Mammary epithelial cell (primary cell): ENCODE measurements at regions of chr14 and their contacts with region 1.

Region 1: GRCh38 chr14:23665375-23666192 is 29.4 kb downstream of the DHRS2 start:
- DNase-seq: peak; percentile 27
- H3K4me3 ChIP-seq: no peak overlapping the region
- H3K27ac ChIP-seq: no peak overlapping the region
- H3K4me1 ChIP-seq: peaks cover 17% of the 10 kb centered on the region
- H3K27me3 ChIP-seq: no peaks in the 10 kb centered on the region
- CTCF ChIP-seq: peak; percentile 65 to 76

Region 2: DNA sequence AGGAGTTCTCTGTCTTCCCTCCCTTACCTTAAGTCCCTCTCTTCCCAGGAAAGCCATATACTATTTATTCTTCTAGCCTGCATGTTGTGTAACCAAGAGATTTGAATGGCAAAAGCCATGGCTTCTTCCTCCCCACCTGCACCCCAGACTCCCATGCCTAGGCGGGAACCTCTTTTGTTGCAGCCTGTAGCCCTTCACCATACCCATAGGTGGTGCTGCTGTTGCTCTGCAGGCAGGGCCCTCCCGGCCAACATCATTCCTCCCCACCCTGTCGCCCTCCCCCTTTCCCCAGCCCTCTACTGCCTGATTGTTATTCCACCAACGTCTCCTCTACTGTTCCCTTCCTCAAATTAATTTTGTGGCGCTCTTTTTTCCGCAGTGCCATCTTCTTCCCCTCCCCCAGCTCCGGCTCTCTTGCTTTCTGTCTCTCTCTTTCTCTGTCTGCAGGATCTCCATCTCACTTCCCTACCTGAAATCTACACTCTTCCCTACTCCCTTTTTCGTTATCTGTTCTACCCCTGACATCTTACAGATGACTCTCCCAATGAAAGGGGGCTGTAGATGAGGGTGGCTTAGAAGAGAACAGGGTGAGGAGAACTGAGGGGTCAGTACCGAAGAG is 182.2 kb before region 1 on chr14:
- CTCF ChIA-PET with region 1: no interaction called
- dilution Hi-C with region 1: no loop called
- in situ Hi-C with region 1: no loop called
- intact Hi-C with region 1: no loop called
- DNase-seq: no peak
- H3K4me3 ChIP-seq: no peak overlapping the region
- H3K27ac ChIP-seq: no peak overlapping the region
- H3K4me1 ChIP-seq: no peaks in the 10 kb centered on the region
- H3K27me3 ChIP-seq: no peaks in the 10 kb centered on the region
- CTCF ChIP-seq: peak; percentile 30 to 38

Region 3: DNA sequence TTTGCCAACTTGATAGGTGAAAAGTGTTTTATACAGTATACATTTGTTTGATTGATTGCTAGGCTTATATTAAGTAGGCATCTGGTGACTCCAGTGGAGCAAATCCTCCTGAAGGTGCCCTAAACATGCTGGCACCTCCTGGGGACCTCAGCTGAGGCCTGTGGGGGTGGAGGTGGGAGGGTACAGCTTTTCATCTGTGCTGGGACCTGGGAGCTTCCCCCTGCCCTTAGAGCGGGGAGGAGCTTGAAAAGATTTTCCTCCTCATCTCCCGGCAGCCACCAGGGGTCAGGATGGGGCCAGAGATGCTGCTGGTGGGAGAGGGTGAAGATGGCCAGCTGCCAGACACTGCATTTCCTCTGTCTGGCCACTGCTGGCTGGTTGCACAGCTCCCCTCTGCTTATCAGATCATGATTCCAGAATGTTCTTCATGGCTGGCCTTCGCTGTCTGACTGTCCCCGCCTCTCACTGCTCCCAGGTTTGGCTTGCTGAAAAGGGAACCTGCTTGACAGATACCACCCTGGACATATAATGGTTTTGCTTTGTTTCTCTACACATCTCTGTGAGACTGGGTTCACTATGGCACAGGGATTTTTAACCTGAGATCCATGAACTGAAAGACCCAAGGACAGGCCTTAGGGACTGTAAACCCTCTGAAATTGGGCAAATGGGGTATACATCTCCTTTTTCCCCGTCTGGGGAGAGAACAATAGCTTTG is 76.5 kb before region 1 on chr14:
- CTCF ChIA-PET with region 1: interaction called, 19 read pairs
- dilution Hi-C with region 1: no loop called
- in situ Hi-C with region 1: no loop called
- intact Hi-C with region 1: no loop called
- DNase-seq: peak; percentile 72
- H3K4me3 ChIP-seq: no peak overlapping the region
- H3K27ac ChIP-seq: no peak overlapping the region
- H3K4me1 ChIP-seq: no peaks in the 10 kb centered on the region
- H3K27me3 ChIP-seq: no peaks in the 10 kb centered on the region
- CTCF ChIP-seq: peak; percentile 68 to 88

Region 4: DNA sequence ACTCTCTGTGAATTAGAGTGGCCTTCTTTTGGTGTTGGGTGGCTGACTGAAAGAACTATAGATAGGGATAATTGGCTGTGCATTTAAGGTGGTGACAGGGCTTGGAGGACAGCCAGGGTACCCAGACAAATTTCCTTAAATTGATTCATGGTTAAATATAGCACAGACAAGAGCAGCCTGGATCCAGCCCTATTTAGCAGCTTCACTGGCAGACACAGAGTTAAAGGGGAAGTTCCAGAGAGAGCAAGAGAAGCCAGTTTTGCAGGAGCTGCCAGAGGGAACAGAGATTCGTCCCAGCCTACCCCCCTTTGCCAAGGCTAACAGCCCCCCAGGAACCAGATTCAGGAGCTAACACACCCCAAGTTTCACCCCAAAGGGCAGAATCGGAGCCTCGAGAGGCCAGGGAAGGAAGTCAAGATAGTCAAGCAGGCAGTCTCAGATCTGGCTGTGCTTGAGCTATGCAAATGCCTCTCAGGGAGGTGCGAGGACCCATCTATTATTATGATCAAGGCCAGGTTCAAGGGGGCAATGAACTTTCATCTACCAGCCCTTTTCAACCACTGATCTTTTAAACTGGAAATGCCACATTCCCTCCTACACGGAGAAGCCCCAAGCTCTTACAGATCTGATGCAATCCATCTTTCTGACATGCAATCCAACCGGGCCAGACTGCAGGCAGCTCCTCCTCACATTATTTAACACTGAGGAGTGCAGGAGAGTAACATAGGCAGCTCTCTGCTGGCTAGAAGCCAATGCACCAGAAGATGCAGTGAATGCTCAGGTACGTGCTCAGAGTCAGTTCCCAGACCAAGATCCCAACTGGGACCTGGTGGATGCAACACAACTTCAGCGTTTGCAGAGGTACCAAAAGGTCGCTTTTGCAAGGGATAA is 28.7 kb after region 1 on chr14:
- CTCF ChIA-PET with region 1: interaction called, 12 read pairs
- dilution Hi-C with region 1: no loop called
- in situ Hi-C with region 1: no loop called
- intact Hi-C with region 1: no loop called
- DNase-seq: peak; percentile 22
- H3K4me3 ChIP-seq: no peak overlapping the region
- H3K27ac ChIP-seq: no peak overlapping the region
- H3K4me1 ChIP-seq: peaks cover 5% of the 10 kb centered on the region
- H3K27me3 ChIP-seq: no peaks in the 10 kb centered on the region
- CTCF ChIP-seq: no peak

Region 5: DNA sequence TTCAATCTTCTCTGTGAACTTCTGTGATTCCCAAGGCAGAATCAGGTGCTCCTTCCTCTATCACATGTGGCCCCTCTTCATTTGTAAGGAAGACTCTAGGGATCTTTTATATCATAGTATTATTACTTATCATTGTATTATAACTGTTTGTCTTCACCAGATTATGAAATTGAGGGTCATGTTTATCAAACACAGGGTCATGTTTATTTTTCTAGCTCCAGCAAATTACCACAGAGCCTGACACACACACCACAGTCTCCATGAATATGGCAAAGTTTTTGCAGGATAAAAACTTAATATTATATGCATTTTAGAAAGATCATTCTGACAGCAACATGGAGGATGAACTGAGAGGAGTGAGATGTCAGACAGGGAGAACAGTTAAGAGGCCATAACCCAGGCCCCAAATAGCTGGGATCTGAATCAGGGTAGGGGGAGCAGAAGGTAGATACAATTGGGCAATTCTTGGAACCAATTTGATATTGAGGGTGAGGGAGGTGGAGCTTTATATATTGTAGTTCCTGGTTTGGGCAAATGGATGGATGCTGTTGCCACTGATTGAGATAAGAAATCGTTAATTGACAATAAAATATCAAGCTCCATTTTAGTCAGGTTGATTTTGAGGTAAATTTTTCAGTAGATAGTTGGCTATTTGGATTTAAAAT is 101.3 kb after region 1 on chr14:
- CTCF ChIA-PET with region 1: no interaction called
- dilution Hi-C with region 1: no loop called
- in situ Hi-C with region 1: no loop called
- intact Hi-C with region 1: no loop called
- DNase-seq: no peak
- H3K4me3 ChIP-seq: no peak overlapping the region
- H3K27ac ChIP-seq: no peak overlapping the region
- H3K4me1 ChIP-seq: no peaks in the 10 kb centered on the region
- H3K27me3 ChIP-seq: no peaks in the 10 kb centered on the region
- CTCF ChIP-seq: no peak

Region 6: GRCh38 chr14:23910101-23910875 is 244.7 kb after region 1 on chr14:
- CTCF ChIA-PET with region 1: interaction called, 53 read pairs
- dilution Hi-C with region 1: no loop called
- in situ Hi-C with region 1: loop called in 1 of 2 experiments (anchors 5 kb)
- intact Hi-C with region 1: loop called (anchors 1 kb)
- DNase-seq: peak; percentile 53
- H3K4me3 ChIP-seq: no peak overlapping the region
- H3K27ac ChIP-seq: no peak overlapping the region
- H3K4me1 ChIP-seq: no peaks in the 10 kb centered on the region
- H3K27me3 ChIP-seq: no peaks in the 10 kb centered on the region
- CTCF ChIP-seq: peak; percentile 90 to 92

Region 7: GRCh38 chr14:23936084-23936829 is 270.7 kb after region 1 on chr14:
- CTCF ChIA-PET with region 1: interaction called, 12 read pairs
- dilution Hi-C with region 1: no loop called
- in situ Hi-C with region 1: no loop called
- intact Hi-C with region 1: no loop called
- DNase-seq: no peak
- H3K4me3 ChIP-seq: no peak overlapping the region
- H3K27ac ChIP-seq: no peak overlapping the region
- H3K4me1 ChIP-seq: no peaks in the 10 kb centered on the region
- H3K27me3 ChIP-seq: no peaks in the 10 kb centered on the region
- CTCF ChIP-seq: no peak